ENCODE measurements at regions of chrX and their contacts with region 1.

Region 1: DNA sequence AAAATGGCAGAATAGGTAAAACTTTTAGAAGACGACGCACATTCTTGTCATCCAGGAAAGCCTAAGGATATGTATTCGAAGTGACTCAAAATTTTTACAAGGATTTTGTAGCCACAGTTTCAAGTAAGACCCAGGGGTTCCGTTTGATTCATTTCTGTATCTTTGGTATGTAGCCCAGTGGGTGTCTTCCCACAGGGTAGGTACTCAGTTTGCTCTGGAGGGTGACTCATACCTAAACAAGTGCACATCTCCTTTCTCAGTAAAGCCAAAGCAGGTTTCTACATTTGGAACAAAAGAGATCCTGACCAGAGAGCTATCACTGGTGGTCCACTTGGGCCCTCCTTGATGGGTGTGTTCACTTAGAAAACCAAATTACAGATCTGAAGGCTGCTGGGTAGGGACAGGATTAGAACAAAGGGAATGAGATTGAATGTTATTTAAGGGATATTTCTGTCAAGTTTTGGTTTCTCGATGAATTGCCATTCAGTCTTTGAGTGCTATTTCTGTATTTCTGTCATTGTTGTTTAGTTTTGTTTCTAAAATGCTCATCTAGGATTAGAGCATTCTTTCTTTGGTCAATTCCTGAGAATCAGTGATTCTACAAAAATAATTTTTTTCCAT is 56.1 kb downstream of the PLS3 start:
- DNase-seq: peak; percentile 58
- ATAC-seq: peak; percentile 96
- H3K4me3 ChIP-seq: no peak overlapping the region
- H3K27ac ChIP-seq: no peak overlapping the region; the same call in 1 of the 2 replicates
- H3K4me1 ChIP-seq: no peaks in the 10 kb centered on the region; the same call in 1 of the 2 replicates
- H3K27me3 ChIP-seq: no peaks in the 10 kb centered on the region; a peak in 1 of 4 replicates
- CTCF ChIP-seq: no peak
- EP300 ChIP-seq: peak in 1 of 2 experiments; percentile 50; a peak in 1 of 4 replicates
- POLR2A ChIP-seq: no peak
- RAD21 ChIP-seq: no peak

Region 2: DNA sequence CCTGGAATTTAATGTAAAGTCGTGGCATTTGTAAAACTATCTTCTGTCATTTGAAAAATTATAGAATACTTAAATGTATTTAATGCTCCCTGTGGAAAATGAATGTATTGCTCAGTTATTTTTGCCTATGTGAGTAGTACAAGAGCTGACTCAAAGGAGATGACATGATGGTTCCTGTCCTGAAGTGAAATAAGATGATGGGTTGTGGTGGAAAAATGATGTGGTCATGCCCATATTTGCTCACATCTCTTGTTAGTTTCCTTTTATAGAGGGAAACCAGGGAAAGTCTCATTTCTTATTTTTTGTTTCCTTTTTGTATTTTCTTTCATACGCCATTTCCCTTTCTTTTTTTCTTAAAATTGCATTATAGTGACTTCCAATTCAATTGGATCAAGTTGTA is 32.4 kb before region 1 on chrX:
- CTCF ChIA-PET with region 1: no interaction called
- POLR2A ChIA-PET with region 1: no interaction called
- RAD21 ChIA-PET with region 1: interaction called, 9 read pairs
- SMC1A ChIA-PET with region 1: interaction called, 49 read pairs
- in situ Hi-C with region 1: no loop called
- intact Hi-C with region 1: no loop called
- DNase-seq: no peak
- ATAC-seq: peak; percentile 79
- H3K4me3 ChIP-seq: no peak overlapping the region
- H3K27ac ChIP-seq: no peak overlapping the region
- H3K4me1 ChIP-seq: no peaks in the 10 kb centered on the region
- H3K27me3 ChIP-seq: no peaks in the 10 kb centered on the region
- CTCF ChIP-seq: no peak
- EP300 ChIP-seq: no peak
- POLR2A ChIP-seq: no peak
- RAD21 ChIP-seq: no peak

Region 3: GRCh38 chrX:115592997-115593734 is 23.9 kb before region 1 on chrX:
- CTCF ChIA-PET with region 1: interaction called, 3 read pairs
- POLR2A ChIA-PET with region 1: interaction called, 3 read pairs
- RAD21 ChIA-PET with region 1: interaction called, 11 read pairs
- SMC1A ChIA-PET with region 1: interaction called, 49 read pairs
- in situ Hi-C with region 1: no loop called
- intact Hi-C with region 1: no loop called
- DNase-seq: no peak
- ATAC-seq: peak; percentile 22; the same call in 2 of the 3 replicates
- H3K4me3 ChIP-seq: no peak overlapping the region
- H3K27ac ChIP-seq: no peak overlapping the region
- H3K4me1 ChIP-seq: no peaks in the 10 kb centered on the region
- H3K27me3 ChIP-seq: no peaks in the 10 kb centered on the region
- CTCF ChIP-seq: no peak
- EP300 ChIP-seq: no peak
- POLR2A ChIP-seq: no peak
- RAD21 ChIP-seq: no peak

Region 4: GRCh38 chrX:115602729-115603389 is 14.2 kb before region 1 on chrX:
- CTCF ChIA-PET with region 1: interaction called, 6 read pairs
- POLR2A ChIA-PET with region 1: interaction called, 5 read pairs
- RAD21 ChIA-PET with region 1: no interaction called
- SMC1A ChIA-PET with region 1: interaction called, 26 read pairs
- in situ Hi-C with region 1: no loop called
- intact Hi-C with region 1: no loop called
- DNase-seq: no peak
- ATAC-seq: peak; percentile 57
- H3K4me3 ChIP-seq: no peak overlapping the region
- H3K27ac ChIP-seq: no peak overlapping the region
- H3K4me1 ChIP-seq: no peaks in the 10 kb centered on the region
- H3K27me3 ChIP-seq: no peaks in the 10 kb centered on the region; a peak in 1 of 4 replicates
- CTCF ChIP-seq: no peak
- EP300 ChIP-seq: no peak
- POLR2A ChIP-seq: no peak
- RAD21 ChIP-seq: no peak

Measured in GM12878 (cell line).